Lower lobe of right lung (tissue), 2 donors: ENCODE measurements at regions of chr6 and their contacts with region 1.

Region 1: GRCh38 chr6:56637640-56638039 is 5.0 kb downstream of the DST start:
- DNase-seq: no peak
- ATAC-seq: peak in 1 of 2 donors; percentile 51
- H3K4me3 ChIP-seq: no peak overlapping the region
- H3K27ac ChIP-seq: no peak overlapping the region
- H3K4me1 ChIP-seq: no peaks in the 10 kb centered on the region
- H3K27me3 ChIP-seq: no peaks in the 10 kb centered on the region
- CTCF ChIP-seq: peak; percentile 70

Region 2: GRCh38 chr6:56699066-56699654 is 61.5 kb after region 1 on chr6:
- intact Hi-C with region 1: loop called (anchors 10 kb)
- DNase-seq: no peak
- ATAC-seq: peak in 1 of 2 donors; percentile 61
- H3K4me3 ChIP-seq: no peak overlapping the region
- H3K27ac ChIP-seq: no peak overlapping the region
- H3K4me1 ChIP-seq: no peaks in the 10 kb centered on the region
- H3K27me3 ChIP-seq: no peaks in the 10 kb centered on the region
- CTCF ChIP-seq: peak; percentile 52

Region 3: DNA sequence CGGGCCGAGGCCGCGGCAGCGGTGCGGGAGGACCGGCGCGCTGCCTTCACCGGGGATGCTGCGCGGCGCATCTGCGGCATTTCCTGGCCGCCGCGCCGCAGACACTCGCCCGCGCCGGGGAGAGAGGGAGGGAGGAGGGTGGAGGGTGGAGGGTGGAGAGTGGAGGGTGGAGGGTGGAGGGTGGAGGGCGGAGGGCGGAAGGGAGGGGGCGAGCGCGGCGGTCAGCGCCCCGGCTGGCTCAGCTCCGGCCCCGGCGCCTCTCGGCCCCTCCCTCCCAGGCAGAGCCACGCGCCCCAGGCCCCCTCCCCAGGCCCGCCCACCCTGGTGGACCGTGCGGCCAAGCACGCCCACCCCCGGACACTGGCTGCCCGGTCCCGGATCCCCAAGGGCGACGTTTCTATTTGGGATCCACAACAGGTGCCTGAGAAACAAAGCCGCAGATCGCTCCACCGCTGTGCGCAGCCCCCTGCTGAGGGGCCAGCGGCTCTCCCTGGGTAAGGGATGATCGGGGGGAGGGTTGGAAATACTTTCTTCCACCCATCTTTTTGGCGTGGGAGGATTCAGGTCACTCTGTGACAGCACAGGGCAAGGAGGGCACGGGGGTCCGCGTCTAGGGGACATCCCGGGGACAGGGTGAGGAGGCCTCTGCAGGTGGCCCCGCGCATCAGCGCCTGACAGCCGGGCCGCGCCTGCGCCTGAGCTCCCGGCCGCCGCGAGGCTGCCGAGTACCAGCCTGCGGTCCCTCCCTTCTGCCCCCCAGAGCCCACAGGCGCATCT is 206.1 kb after region 1 on chr6:
- intact Hi-C with region 1: loop called (anchors 10 kb)
- DNase-seq: peak; percentile 81
- ATAC-seq: peak; percentile 92 to 94
- H3K4me3 ChIP-seq: peak overlapping the region; percentile 67
- H3K27ac ChIP-seq: peak overlapping the region; percentile 81
- H3K4me1 ChIP-seq: peaks cover 7% of the 10 kb centered on the region
- H3K27me3 ChIP-seq: no peaks in the 10 kb centered on the region
- CTCF ChIP-seq: peak; percentile 61